Naive thymus-derived CD8-positive, alpha-beta T cell (primary cell): ENCODE measurements at regions of chr5 and their contacts with region 1.

Region 1: GRCh38 chr5:181207214-181208107 is 2.5 kb upstream of the TRIM7 start:
- DNase-seq: peak in 9 of 10 donors; percentile 54 to 88 (median 78)
- ATAC-seq: peak; percentile 59 to 74
- H3K4me3 Mint-ChIP-seq: peak overlapping the region; percentile 87 to 98 (median 93)
- H3K27ac Mint-ChIP-seq: peak overlapping the region; percentile 90 to 100 (median 92)
- H3K4me1 Mint-ChIP-seq: peaks cover 27 to 58% (median 34%) of the 10 kb centered on the region in 4 donors
- H3K27me3 Mint-ChIP-seq: peaks cover 4 to 20% (median 11%) of the 10 kb centered on the region in 5 donors

Region 2: DNA sequence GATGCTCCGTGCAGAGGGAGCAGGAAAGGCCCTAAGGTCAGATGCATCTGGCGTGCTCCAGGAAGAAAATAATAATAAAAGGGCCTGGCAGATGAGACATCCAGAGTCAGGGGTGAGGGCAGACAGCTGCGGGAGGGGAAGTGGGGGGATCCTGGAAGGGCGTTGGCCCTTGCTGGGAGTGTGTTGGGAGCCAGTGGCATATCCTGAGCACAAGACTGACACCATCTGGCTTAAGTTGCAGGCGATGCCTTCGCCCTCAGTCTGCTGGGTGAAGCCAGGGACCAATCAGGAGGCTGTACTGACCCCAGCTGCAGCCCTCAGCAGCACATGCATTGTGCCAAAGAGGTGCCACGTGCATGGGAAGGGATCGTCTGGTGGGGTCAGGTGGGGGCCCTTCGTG is 56.3 kb before region 1 on chr5:
- POLR2A ChIA-PET with region 1: no interaction called
- DNase-seq: no peak
- ATAC-seq: no peak
- H3K4me3 Mint-ChIP-seq: no peak overlapping the region
- H3K27ac Mint-ChIP-seq: no peak overlapping the region
- H3K4me1 Mint-ChIP-seq: peaks cover 0 to 6% (median 3%) of the 10 kb centered on the region in 4 donors
- H3K27me3 Mint-ChIP-seq: peaks cover 20 to 52% (median 42%) of the 10 kb centered on the region in 5 donors

Region 3: GRCh38 chr5:181181650-181182565 is 25.6 kb before region 1 on chr5:
- POLR2A ChIA-PET with region 1: interaction called, 281 read pairs
- DNase-seq: peak in 9 of 10 donors; percentile 50 to 83 (median 64)
- ATAC-seq: peak; percentile 45 to 70
- H3K4me3 Mint-ChIP-seq: peak overlapping the region in 8 of 10 donors; percentile 66 to 91 (median 86)
- H3K27ac Mint-ChIP-seq: peak overlapping the region in 8 of 10 donors; percentile 53 to 95 (median 86)
- H3K4me1 Mint-ChIP-seq: peaks cover 6 to 38% (median 26%) of the 10 kb centered on the region in 4 donors
- H3K27me3 Mint-ChIP-seq: peaks cover 0 to 2% (median 0%) of the 10 kb centered on the region in 5 donors

Region 4: GRCh38 chr5:181243512-181244343 is 36.3 kb after region 1 on chr5 and contains the start of gene RACK1:
- POLR2A ChIA-PET with region 1: interaction called, 11 read pairs
- DNase-seq: peak; percentile 76 to 96 (median 89)
- ATAC-seq: peak; percentile 76 to 79
- H3K4me3 Mint-ChIP-seq: peak within 1 kb of the TSS; percentile 96 to 100 (median 99)
- H3K27ac Mint-ChIP-seq: peak within 1 kb of the TSS; percentile 94 to 99 (median 98)
- H3K4me1 Mint-ChIP-seq: peaks cover 35 to 78% (median 74%) of the 10 kb centered on the region in 4 donors
- H3K27me3 Mint-ChIP-seq: no peaks in the 10 kb centered on the region
- polyA plus RNA-seq, gene RACK1: 2,449 to 2,566 (median 2,565) TPM